SK-N-SH (cell line): ENCODE measurements at regions of chr7 and their contacts with region 1.

Region 1: GRCh38 chr7:50679218-50680007 is 103.3 kb downstream of the GRB10 start:
- DNase-seq: peak; percentile 80
- H3K4me3 ChIP-seq: no peak overlapping the region
- H3K27ac ChIP-seq: no peak overlapping the region
- H3K4me1 ChIP-seq: peaks cover 0 to 22% of the 10 kb centered on the region in 2 experiments; a peak in 2 of 4 replicates
- H3K27me3 ChIP-seq: no peaks in the 10 kb centered on the region
- CTCF ChIP-seq: peak; percentile 68
- EP300 ChIP-seq: no peak
- RAD21 ChIP-seq: peak; percentile 99

Region 2: DNA sequence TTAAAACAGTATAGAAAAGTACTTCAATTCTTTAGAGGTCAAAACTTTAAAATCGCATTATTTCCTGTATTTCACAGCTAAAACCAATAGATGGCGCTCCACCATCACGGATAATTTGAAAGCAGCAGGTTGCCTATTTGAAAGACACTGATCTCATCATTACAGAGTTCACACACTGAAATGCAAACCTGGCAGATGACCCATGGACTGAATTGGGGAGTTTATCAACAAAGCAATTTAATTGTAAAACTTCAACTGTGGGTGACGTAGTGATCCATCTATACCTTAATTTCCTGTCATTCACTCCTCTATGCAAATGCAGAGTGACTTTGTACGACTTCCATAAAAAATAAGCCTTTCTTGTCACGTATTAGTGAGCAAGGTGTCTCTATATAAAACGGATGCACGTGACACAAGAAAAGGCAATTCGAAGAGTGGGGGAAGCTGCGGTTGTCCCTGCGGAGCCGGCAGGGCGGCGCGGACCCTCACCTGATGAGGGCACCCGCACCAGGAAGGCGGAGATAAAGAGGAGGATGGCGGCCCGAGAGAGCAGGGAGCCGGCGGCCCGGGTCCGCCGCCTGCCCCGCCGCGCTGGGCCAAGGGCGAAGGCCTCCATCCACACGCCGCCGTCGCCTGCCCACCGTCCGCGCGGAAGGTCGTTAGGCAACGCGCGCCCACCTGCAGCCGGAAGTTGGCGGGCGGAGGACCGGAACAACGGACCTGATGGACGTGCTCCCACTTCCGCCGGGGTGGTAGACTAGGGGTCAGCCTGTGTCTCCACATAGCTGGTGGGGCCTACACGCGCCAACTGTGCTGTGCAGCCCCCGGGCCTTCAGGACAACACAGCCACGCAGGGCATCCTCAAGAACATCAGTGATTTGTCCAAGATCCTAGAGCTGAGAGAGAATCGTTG is 586.6 kb before region 1 on chr7 and contains the start of gene ZPBP:
- CTCF ChIA-PET with region 1: interaction called, 14 read pairs
- POLR2A ChIA-PET with region 1: no interaction called
- DNase-seq: peak; percentile 65
- H3K4me3 ChIP-seq: no peak within 1 kb of the TSS; a peak in 1 of 4 replicates
- H3K27ac ChIP-seq: no peak within 1 kb of the TSS
- H3K4me1 ChIP-seq: no peaks in the 10 kb centered on the region
- H3K27me3 ChIP-seq: no peaks in the 10 kb centered on the region
- CTCF ChIP-seq: peak; percentile 98
- EP300 ChIP-seq: no peak
- RAD21 ChIP-seq: peak; percentile 95
- polyA plus RNA-seq, gene ZPBP: not detected in 2 replicates

Region 3: DNA sequence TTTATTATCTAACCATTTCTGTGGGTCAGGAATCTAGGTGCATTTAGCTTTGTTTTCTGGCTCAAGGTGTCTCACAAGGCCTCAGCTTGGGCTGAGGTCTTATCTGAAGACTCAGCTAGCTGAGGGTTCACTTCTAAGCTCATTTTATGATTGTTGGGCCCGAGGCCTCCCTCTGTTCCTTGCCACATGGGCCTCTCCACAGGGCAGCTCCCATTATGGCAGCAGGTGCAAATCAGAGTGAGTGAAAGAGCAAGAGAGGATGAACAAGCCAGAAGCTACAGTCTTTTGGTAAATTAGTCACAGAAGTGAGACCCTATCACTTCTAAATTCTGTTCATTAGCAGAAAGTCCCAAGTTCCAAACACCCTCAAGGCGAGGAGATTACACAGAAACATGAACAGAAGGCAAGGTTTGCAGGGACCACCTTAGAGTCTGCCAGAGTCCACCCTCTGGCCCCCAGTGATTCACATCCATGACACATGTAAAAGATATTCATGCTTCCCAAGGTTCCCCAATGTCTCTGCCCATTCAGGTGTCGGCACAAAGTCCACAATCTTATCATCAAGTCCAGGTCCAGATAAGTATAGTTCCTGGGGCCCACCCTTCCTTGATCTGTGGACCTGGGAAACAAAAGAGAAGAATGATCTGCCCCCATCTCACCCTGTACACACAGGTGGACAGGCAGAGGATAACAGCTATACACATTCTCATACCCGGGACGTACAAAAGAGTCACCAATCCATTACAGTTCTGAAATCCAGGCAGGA is 252.9 kb before region 1 on chr7:
- CTCF ChIA-PET with region 1: interaction called, 19 read pairs
- POLR2A ChIA-PET with region 1: no interaction called
- DNase-seq: no peak
- H3K4me3 ChIP-seq: no peak overlapping the region
- H3K27ac ChIP-seq: no peak overlapping the region
- H3K4me1 ChIP-seq: peaks cover 0 to 26% of the 10 kb centered on the region in 2 experiments; a peak in 2 of 4 replicates
- H3K27me3 ChIP-seq: no peaks in the 10 kb centered on the region
- CTCF ChIP-seq: no peak
- EP300 ChIP-seq: no peak
- RAD21 ChIP-seq: no peak

Region 4: GRCh38 chr7:50560865-50561351 is 118.5 kb before region 1 on chr7:
- CTCF ChIA-PET with region 1: interaction called, 35 read pairs
- POLR2A ChIA-PET with region 1: interaction called, 7 read pairs
- DNase-seq: peak; percentile 91
- H3K4me3 ChIP-seq: peak overlapping the region; percentile 28 to 55; a peak in 3 of 4 replicates
- H3K27ac ChIP-seq: peak overlapping the region in 1 of 2 experiments; percentile 99; a peak in 2 of 4 replicates
- H3K4me1 ChIP-seq: peaks cover 0 to 66% of the 10 kb centered on the region in 2 experiments; a peak in 2 of 4 replicates
- H3K27me3 ChIP-seq: peaks cover 60% of the 10 kb centered on the region
- CTCF ChIP-seq: no peak
- EP300 ChIP-seq: peak in 1 of 2 experiments; percentile 85; a peak in 2 of 4 replicates
- RAD21 ChIP-seq: peak; percentile 25

Region 5: GRCh38 chr7:50610521-50611277 is 68.7 kb before region 1 on chr7:
- CTCF ChIA-PET with region 1: interaction called, 14 read pairs
- POLR2A ChIA-PET with region 1: no interaction called
- DNase-seq: no peak
- H3K4me3 ChIP-seq: no peak overlapping the region
- H3K27ac ChIP-seq: peak overlapping the region in 1 of 2 experiments; percentile 6; a peak in 2 of 4 replicates
- H3K4me1 ChIP-seq: peaks cover 4 to 13% of the 10 kb centered on the region in 2 experiments; a peak in 1 of 4 replicates
- H3K27me3 ChIP-seq: no peaks in the 10 kb centered on the region
- CTCF ChIP-seq: no peak
- EP300 ChIP-seq: no peak
- RAD21 ChIP-seq: no peak